B cell (primary cell): ENCODE measurements at regions of chr12 and their contacts with region 1.

Region 1: GRCh38 chr12:101919447-101919846 is 42.1 kb downstream of the DRAM1 start:
- DNase-seq: no peak
- ATAC-seq: no peak
- H3K4me3 ChIP-seq: no peak overlapping the region
- H3K4me3 Mint-ChIP-seq: no peak overlapping the region
- H3K27ac ChIP-seq: no peak overlapping the region
- H3K27ac Mint-ChIP-seq: no peak overlapping the region
- H3K4me1 ChIP-seq: peaks cover 10 to 13% of the 10 kb centered on the region in 2 donors
- H3K4me1 Mint-ChIP-seq: peaks cover 19% of the 10 kb centered on the region
- H3K27me3 ChIP-seq: no peaks in the 10 kb centered on the region
- H3K27me3 Mint-ChIP-seq: no peaks in the 10 kb centered on the region
- CTCF ChIP-seq: no peak

Region 2: GRCh38 chr12:101773650-101774162 is 145.7 kb before region 1 on chr12:
- CTCF ChIA-PET with region 1: interaction called, 7 read pairs
- POLR2A ChIA-PET with region 1: no interaction called
- intact Hi-C with region 1: loop called (anchors 5 kb)
- DNase-seq: peak; percentile 77
- ATAC-seq: peak; percentile 86
- H3K4me3 ChIP-seq: no peak overlapping the region
- H3K4me3 Mint-ChIP-seq: no peak overlapping the region
- H3K27ac ChIP-seq: no peak overlapping the region
- H3K27ac Mint-ChIP-seq: no peak overlapping the region
- H3K4me1 ChIP-seq: no peaks in the 10 kb centered on the region
- H3K4me1 Mint-ChIP-seq: peaks cover 1% of the 10 kb centered on the region
- H3K27me3 ChIP-seq: no peaks in the 10 kb centered on the region
- H3K27me3 Mint-ChIP-seq: no peaks in the 10 kb centered on the region
- CTCF ChIP-seq: peak; percentile 98

Region 3: GRCh38 chr12:101819467-101819866 is 100.0 kb before region 1 on chr12:
- CTCF ChIA-PET with region 1: no interaction called
- POLR2A ChIA-PET with region 1: no interaction called
- intact Hi-C with region 1: no loop called
- DNase-seq: no peak
- ATAC-seq: no peak
- H3K4me3 ChIP-seq: no peak overlapping the region
- H3K4me3 Mint-ChIP-seq: no peak overlapping the region
- H3K27ac ChIP-seq: no peak overlapping the region
- H3K27ac Mint-ChIP-seq: no peak overlapping the region
- H3K4me1 ChIP-seq: peaks cover 6 to 7% of the 10 kb centered on the region in 2 donors
- H3K4me1 Mint-ChIP-seq: peaks cover 24% of the 10 kb centered on the region
- H3K27me3 ChIP-seq: no peaks in the 10 kb centered on the region
- H3K27me3 Mint-ChIP-seq: no peaks in the 10 kb centered on the region
- CTCF ChIP-seq: no peak

Region 4: GRCh38 chr12:101931498-101932326 is 12.3 kb after region 1 on chr12:
- CTCF ChIA-PET with region 1: interaction called, 89 read pairs
- POLR2A ChIA-PET with region 1: interaction called, 3 read pairs
- intact Hi-C with region 1: loop called (anchors 1 kb)
- DNase-seq: peak; percentile 83
- ATAC-seq: peak; percentile 68
- H3K4me3 ChIP-seq: peak overlapping the region in 3 of 5 experiments; percentile 3 to 41 (median 25)
- H3K4me3 Mint-ChIP-seq: peak overlapping the region; percentile 33
- H3K27ac ChIP-seq: peak overlapping the region; percentile 81 to 93
- H3K27ac Mint-ChIP-seq: peak overlapping the region; percentile 88
- H3K4me1 ChIP-seq: peaks cover 76 to 79% of the 10 kb centered on the region in 2 donors
- H3K4me1 Mint-ChIP-seq: peaks cover 79% of the 10 kb centered on the region
- H3K27me3 ChIP-seq: no peaks in the 10 kb centered on the region
- H3K27me3 Mint-ChIP-seq: no peaks in the 10 kb centered on the region
- CTCF ChIP-seq: no peak

Region 5: GRCh38 chr12:102016472-102016871 is 97.0 kb after region 1 on chr12:
- CTCF ChIA-PET with region 1: no interaction called
- POLR2A ChIA-PET with region 1: no interaction called
- intact Hi-C with region 1: no loop called
- DNase-seq: no peak
- ATAC-seq: no peak
- H3K4me3 ChIP-seq: no peak overlapping the region
- H3K4me3 Mint-ChIP-seq: no peak overlapping the region
- H3K27ac ChIP-seq: no peak overlapping the region
- H3K27ac Mint-ChIP-seq: no peak overlapping the region
- H3K4me1 ChIP-seq: peaks cover under 1% of the 10 kb centered on the region in 2 donors
- H3K4me1 Mint-ChIP-seq: peaks cover 5% of the 10 kb centered on the region
- H3K27me3 ChIP-seq: no peaks in the 10 kb centered on the region
- H3K27me3 Mint-ChIP-seq: no peaks in the 10 kb centered on the region
- CTCF ChIP-seq: no peak

Region 6: DNA sequence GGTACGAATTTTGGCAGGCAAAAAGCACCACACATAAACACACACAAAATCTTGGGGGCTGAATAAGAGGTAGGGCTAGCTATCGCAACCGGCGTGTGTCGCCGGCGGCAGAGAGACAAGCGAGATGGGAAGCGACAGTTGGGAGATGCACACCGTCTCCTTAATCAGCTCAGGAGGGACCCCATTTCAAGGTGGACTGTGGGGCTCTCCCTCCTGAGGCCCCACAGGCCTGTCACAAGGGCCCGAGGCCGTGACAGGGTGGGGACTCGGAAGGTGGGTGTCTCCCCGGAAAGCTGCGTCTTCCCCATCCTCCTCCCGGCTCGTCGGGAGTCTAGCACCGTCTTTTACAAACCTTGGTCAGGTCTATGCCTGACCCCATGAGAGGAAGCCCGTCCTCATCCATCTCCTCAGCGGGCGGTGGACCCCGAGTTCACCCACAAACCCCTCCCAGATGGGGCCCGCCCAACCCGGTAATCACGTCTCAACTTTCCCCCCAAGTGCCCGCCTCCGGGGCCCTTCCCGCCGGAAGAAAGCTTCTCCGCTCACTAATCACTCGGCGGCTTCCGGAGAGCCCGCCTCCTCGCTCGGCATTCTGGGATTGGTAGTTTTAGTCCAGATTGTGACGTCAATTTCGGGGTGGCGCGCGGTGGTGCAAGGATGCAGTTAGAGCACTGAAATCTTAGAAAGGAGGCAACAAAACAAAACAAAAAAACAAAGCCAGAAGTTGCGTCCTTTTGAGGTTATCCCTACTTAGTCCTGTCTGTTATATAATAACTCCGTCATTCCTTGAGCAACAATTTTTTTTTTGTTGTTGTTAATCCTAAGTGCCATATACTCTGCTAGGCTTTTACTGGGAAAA is 142.3 kb after region 1 on chr12 and contains the start of gene WASHC3:
- CTCF ChIA-PET with region 1: interaction called, 3 read pairs
- POLR2A ChIA-PET with region 1: no interaction called
- intact Hi-C with region 1: loop called (anchors 1 kb)
- DNase-seq: peak; percentile 95
- ATAC-seq: peak; percentile 96
- H3K4me3 ChIP-seq: peak within 1 kb of the TSS; percentile 72 to 92 (median 89)
- H3K4me3 Mint-ChIP-seq: peak within 1 kb of the TSS; percentile 95
- H3K27ac ChIP-seq: peak within 1 kb of the TSS; percentile 93 to 96
- H3K27ac Mint-ChIP-seq: peak within 1 kb of the TSS; percentile 96
- H3K4me1 ChIP-seq: peaks cover 5 to 12% of the 10 kb centered on the region in 2 donors
- H3K4me1 Mint-ChIP-seq: peaks cover 27% of the 10 kb centered on the region
- H3K27me3 ChIP-seq: peaks cover 0 to 4% (median 0%) of the 10 kb centered on the region in 4 experiments
- H3K27me3 Mint-ChIP-seq: no peaks in the 10 kb centered on the region
- CTCF ChIP-seq: no peak
- total RNA-seq, gene WASHC3: 52.8 and 55.8 TPM in 2 replicates

Region 7: GRCh38 chr12:102484428-102484958 is 565.0 kb after region 1 on chr12:
- CTCF ChIA-PET with region 1: interaction called, 27 read pairs
- POLR2A ChIA-PET with region 1: no interaction called
- intact Hi-C with region 1: loop called (anchors 1 kb)
- DNase-seq: peak; percentile 73
- ATAC-seq: peak; percentile 75
- H3K4me3 ChIP-seq: peak overlapping the region in 3 of 5 experiments; percentile 11 to 55 (median 44)
- H3K4me3 Mint-ChIP-seq: peak overlapping the region; percentile 80
- H3K27ac ChIP-seq: peak overlapping the region; percentile 19 to 44
- H3K27ac Mint-ChIP-seq: peak overlapping the region; percentile 64
- H3K4me1 ChIP-seq: peaks cover 23 to 27% of the 10 kb centered on the region in 2 donors
- H3K4me1 Mint-ChIP-seq: peaks cover 32% of the 10 kb centered on the region
- H3K27me3 ChIP-seq: no peaks in the 10 kb centered on the region
- H3K27me3 Mint-ChIP-seq: no peaks in the 10 kb centered on the region
- CTCF ChIP-seq: peak; percentile 98

Region 8: GRCh38 chr12:102769319-102769916 is 850.0 kb after region 1 on chr12:
- CTCF ChIA-PET with region 1: interaction called, 3 read pairs
- POLR2A ChIA-PET with region 1: no interaction called
- intact Hi-C with region 1: loop called (anchors 1 kb)
- DNase-seq: peak; percentile 65
- ATAC-seq: peak; percentile 56
- H3K4me3 ChIP-seq: no peak overlapping the region
- H3K4me3 Mint-ChIP-seq: no peak overlapping the region
- H3K27ac ChIP-seq: no peak overlapping the region
- H3K27ac Mint-ChIP-seq: no peak overlapping the region
- H3K4me1 ChIP-seq: no peaks in the 10 kb centered on the region
- H3K4me1 Mint-ChIP-seq: no peaks in the 10 kb centered on the region
- H3K27me3 ChIP-seq: peaks cover 0 to 7% (median 0%) of the 10 kb centered on the region in 4 experiments
- H3K27me3 Mint-ChIP-seq: peaks cover 26% of the 10 kb centered on the region
- CTCF ChIP-seq: peak; percentile 71